Posterior cingulate gyrus (tissue), 11 donors: ENCODE measurements at regions of chr10 and their contacts with region 1.

Region 1: GRCh38 chr10:123559066-123559822 is 106.9 kb upstream of the GPR26 start:
- DNase-seq: peak; percentile 80 to 98 (median 90)

Region 2: GRCh38 chr10:122590153-122590552 is 969.1 kb before region 1 on chr10:
- intact Hi-C with region 1: no loop called
- DNase-seq: no peak

Region 3: DNA sequence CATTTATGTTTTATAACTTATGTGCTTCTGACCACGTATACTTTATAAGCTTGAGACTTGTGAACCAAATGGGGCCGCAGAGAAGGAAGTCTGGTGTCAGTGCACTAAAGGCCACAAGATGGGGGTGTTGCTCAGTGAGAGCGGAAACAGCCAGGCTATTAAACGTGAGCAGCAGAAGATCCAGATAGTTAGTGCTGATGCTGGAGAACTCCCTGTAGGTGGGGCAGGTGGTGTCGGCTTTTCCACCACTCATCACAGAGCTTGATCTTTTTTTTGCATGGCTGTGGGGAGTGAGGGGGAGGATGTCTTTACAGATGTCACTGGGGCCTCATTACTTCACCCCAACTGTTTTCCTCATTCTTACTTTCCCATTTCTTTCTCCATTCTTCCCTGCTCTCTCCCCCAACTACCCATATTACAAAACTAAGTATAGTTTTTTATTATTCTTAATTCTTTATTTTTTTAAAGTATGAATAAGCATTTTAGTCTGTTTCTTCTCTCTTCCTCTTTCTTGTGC is 515.8 kb before region 1 on chr10:
- intact Hi-C with region 1: loop called (anchors 2 kb)
- DNase-seq: peak in 8 of 10 donors; percentile 35 to 95 (median 64)

Region 4: DNA sequence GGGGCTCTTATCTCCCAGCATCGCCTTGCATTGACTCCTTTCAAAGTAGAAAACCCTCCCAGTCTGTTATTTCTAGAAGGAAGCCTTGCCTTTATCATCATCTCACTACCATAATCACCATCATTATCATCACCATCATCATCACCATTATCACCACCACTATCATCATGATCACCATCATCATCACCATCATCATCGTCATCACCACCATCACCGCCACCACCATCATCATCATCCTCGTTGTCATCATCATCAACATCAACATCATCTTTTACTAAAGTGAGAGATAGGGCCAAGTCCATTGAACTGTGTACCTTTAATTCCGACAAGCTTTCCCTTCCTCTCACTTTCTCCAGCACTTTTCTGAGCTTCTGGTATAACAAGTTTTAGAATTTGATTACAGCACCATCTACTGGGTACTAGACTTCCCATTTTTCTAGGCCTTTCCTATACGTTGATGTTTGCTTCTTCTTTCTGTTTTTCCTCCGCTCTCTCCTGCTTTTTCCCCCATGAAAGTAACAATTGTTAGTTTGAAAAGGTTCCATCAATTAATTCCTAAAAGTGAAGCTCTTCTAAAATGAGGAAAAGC is 178.7 kb before region 1 on chr10:
- intact Hi-C with region 1: loop called (anchors 5 kb)
- DNase-seq: no peak